Activated B cell treated with CpG ODN at 0.5 μM for 24 hours (primary cell): ENCODE measurements at regions of chr7 and their contacts with region 1.

Region 1: DNA sequence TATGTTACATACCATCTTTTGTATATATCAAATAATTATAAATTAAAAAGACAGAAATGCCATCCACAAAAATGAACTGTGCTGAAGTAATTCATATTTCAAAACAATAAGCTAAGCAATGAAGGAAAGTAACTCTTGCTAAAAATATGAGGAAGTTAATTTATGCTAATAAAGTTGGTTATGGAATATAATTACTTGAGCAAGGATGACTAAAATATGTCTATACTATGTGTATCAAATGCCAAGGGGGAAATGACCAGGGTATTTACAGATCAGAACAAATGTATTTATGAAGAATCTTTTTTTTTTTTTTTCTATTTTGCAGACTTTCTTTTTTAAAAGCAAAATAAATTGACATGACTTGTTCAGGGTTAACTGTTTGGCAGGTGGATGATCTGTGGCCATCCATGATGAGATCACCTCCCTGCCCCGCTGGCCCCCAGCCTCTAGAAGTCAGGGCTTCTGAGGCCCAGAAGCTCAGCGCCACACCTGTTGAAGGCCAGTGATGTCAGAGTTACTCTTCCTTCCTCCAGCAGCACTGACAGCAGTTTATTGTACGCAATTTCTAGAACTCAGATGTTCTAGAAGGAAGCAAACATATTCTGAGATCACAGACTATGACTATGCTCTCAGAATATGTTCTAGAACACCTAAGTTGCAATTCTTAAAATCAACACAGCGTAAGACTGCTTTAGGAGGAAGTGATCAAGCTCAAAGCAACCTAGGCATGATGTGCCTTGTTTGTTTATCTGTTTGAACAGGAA is 196.1 kb upstream of the KLF14 start:
- DNase-seq: no peak
- ATAC-seq: peak; percentile 57
- H3K4me3 Mint-ChIP-seq: no peak overlapping the region
- H3K27ac Mint-ChIP-seq: peak overlapping the region; percentile 74
- H3K4me1 Mint-ChIP-seq: peaks cover 80% of the 10 kb centered on the region
- H3K27me3 Mint-ChIP-seq: no peaks in the 10 kb centered on the region
- CTCF ChIP-seq: no peak

Region 2: DNA sequence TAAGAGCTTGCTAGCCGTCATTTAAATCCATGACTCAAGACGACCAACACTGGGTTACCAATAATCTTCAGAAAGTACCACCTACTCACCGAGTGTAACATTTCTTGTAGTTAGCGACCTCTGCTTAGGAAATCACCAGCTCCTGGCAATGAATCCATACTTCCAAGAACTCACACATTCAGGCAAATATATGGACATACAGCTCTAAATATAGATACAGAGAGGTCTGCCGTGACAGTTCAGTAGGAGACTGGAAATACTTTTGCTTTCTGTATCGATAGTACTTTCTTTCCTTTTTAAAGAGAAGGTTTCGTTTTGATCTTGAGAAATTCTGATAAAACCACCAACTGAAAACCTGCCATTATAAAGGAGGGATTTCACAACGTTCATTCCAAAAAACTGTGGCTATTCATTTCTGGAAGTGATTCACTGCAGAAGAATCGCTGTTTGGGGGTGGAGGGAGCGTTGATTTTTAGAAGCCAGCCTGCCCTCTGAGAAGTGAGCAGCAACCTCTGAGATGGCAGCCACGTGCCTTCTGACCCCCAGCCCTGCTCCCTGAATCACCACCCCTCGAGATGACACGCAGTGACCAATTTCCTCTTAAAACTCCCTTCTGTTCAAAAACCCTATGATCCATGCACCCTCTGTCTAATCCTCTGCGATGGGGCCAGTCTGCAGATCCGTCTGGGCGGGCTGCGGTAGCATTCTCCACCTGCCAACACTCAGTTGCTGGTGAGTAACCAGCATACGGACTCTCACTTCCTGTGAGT is 17.0 kb before region 1 on chr7:
- CTCF ChIA-PET with region 1: interaction called, 3 read pairs
- POLR2A ChIA-PET with region 1: interaction called, 15 read pairs
- intact Hi-C with region 1: loop called (anchors 1 kb)
- DNase-seq: peak; percentile 54
- ATAC-seq: peak; percentile 91
- H3K4me3 Mint-ChIP-seq: peak overlapping the region; percentile 87
- H3K27ac Mint-ChIP-seq: peak overlapping the region; percentile 90
- H3K4me1 Mint-ChIP-seq: peaks cover 86% of the 10 kb centered on the region
- H3K27me3 Mint-ChIP-seq: no peaks in the 10 kb centered on the region
- CTCF ChIP-seq: no peak

Region 3: DNA sequence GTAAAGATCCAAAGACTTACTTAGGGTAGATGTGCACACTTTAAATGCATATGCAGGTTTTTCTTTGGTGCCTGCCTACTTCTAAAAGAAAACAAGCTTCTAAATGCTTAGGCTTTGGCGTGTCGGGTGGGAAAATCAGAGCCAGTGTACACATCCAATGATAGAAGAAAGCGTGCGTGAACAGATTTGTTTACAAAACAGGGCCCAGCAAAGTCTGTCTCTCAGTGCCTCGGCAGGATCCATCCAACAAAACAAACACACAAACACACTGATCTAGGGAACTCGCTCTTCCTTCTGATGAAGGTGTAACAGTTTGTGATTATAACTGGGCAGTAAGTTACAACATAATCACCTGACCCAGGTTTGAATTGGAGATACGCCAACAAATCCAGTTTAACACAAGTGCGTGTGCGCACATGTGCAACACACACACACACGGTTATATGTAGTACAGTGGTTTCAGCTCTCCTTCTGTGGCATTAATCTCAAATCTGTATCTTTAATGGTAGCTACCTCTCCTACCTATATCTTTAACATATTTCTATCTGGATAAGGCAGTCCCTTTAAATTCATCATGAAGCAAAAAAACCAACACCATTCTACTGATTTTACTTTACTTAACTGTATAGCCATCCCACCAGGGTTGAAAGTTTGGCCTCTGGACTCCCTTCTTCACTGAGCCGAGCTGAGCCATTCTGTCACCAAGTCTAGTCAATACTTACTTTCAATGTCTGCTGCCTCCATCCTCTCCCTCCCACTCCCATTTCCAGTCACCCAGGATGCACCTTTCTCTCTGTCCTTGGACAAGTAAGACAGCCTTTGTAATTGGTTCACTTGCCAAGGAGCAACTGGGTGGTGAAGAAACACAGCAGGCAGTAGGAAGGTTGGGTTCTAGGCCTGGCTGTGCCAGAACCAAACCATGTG is 11.7 kb before region 1 on chr7:
- CTCF ChIA-PET with region 1: interaction called, 3 read pairs
- POLR2A ChIA-PET with region 1: interaction called, 15 read pairs
- intact Hi-C with region 1: loop called (anchors 1 kb)
- DNase-seq: no peak
- ATAC-seq: no peak
- H3K4me3 Mint-ChIP-seq: no peak overlapping the region
- H3K27ac Mint-ChIP-seq: no peak overlapping the region
- H3K4me1 Mint-ChIP-seq: peaks cover 63% of the 10 kb centered on the region
- H3K27me3 Mint-ChIP-seq: no peaks in the 10 kb centered on the region
- CTCF ChIP-seq: no peak

Region 4: GRCh38 chr7:130941322-130942210 is 11.5 kb after region 1 on chr7:
- CTCF ChIA-PET with region 1: interaction called, 3 read pairs
- POLR2A ChIA-PET with region 1: interaction called, 8 read pairs
- intact Hi-C with region 1: loop called (anchors 1 kb)
- DNase-seq: no peak
- ATAC-seq: no peak
- H3K4me3 Mint-ChIP-seq: peak overlapping the region; percentile 78
- H3K27ac Mint-ChIP-seq: peak overlapping the region; percentile 84
- H3K4me1 Mint-ChIP-seq: peaks cover 90% of the 10 kb centered on the region
- H3K27me3 Mint-ChIP-seq: no peaks in the 10 kb centered on the region
- CTCF ChIP-seq: no peak

Region 5: GRCh38 chr7:131002600-131002999 is 72.5 kb after region 1 on chr7:
- CTCF ChIA-PET with region 1: no interaction called
- POLR2A ChIA-PET with region 1: interaction called, 10 read pairs
- intact Hi-C with region 1: no loop called
- DNase-seq: no peak
- ATAC-seq: no peak
- H3K4me3 Mint-ChIP-seq: no peak overlapping the region
- H3K27ac Mint-ChIP-seq: no peak overlapping the region
- H3K4me1 Mint-ChIP-seq: peaks cover 73% of the 10 kb centered on the region
- H3K27me3 Mint-ChIP-seq: no peaks in the 10 kb centered on the region
- CTCF ChIP-seq: no peak

Region 6: GRCh38 chr7:132002343-132002968 is 1072.4 kb after region 1 on chr7:
- CTCF ChIA-PET with region 1: no interaction called
- POLR2A ChIA-PET with region 1: no interaction called
- intact Hi-C with region 1: no loop called
- DNase-seq: no peak
- ATAC-seq: no peak
- H3K4me3 Mint-ChIP-seq: no peak overlapping the region
- H3K27ac Mint-ChIP-seq: no peak overlapping the region
- H3K4me1 Mint-ChIP-seq: no peaks in the 10 kb centered on the region
- H3K27me3 Mint-ChIP-seq: no peaks in the 10 kb centered on the region
- CTCF ChIP-seq: no peak